AG04450 (cell line): ENCODE measurements at regions of chr13 and their contacts with region 1.

Region 1: DNA sequence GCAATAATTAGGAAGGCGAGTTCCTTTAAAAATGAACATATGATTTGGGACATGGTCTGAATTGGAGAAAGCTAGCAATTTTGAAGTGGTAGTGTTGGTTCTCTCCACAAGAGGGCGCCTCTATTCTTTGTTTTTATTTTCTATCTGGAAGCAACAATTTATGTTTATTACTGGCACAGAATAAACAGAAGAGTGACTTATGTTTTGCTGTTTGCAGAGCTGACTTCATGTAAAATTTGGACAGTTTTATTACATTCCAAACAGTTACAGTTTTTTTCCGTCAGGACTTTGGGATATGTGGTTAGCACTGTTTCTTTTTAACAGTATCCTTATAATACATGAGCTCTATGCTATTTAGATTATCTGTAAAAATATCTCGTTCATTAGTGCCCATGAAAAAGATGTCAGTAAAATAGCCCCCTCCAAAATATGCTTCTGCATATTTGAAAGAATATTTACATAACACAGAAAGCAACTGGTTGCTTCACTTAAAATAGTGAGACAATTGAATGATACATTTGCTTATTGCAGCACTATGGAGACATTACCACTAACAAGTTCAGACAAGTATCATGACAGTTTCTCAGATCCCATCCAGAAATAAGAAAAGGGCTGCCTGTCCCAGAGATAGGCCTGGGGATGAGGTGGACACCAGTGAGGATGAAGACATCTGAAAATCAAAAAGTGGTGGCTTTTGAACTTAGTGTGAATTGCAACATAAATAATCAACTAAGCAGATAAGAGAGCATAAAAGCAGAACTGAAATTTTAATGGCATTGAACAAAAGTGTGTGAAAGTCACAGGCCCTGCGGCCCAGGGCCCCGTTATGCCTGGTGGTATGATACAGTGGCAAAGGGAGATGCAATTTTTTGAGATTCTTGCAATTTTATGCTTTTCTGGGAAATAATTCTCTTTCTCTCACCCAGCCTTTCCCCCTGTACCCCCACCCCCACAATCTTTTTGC is 32.3 kb upstream of the FGF9 start:
- DNase-seq: no peak
- H3K4me3 ChIP-seq: no peak overlapping the region
- H3K27ac ChIP-seq: no peak overlapping the region
- H3K27me3 ChIP-seq: peaks cover 6% of the 10 kb centered on the region
- CTCF ChIP-seq: peak; percentile 74

Region 2: GRCh38 chr13:21348488-21349120 is 290.0 kb before region 1 on chr13:
- CTCF ChIA-PET with region 1: no interaction called
- POLR2A ChIA-PET with region 1: no interaction called
- DNase-seq: no peak
- H3K4me3 ChIP-seq: no peak overlapping the region
- H3K27ac ChIP-seq: no peak overlapping the region
- H3K27me3 ChIP-seq: peaks cover 2% of the 10 kb centered on the region
- CTCF ChIP-seq: no peak

Region 3: GRCh38 chr13:21616880-21617279 is 21.7 kb before region 1 on chr13:
- CTCF ChIA-PET with region 1: interaction called, 12 read pairs
- POLR2A ChIA-PET with region 1: no interaction called
- DNase-seq: no peak
- H3K4me3 ChIP-seq: no peak overlapping the region
- H3K27ac ChIP-seq: no peak overlapping the region
- H3K27me3 ChIP-seq: peaks cover 18% of the 10 kb centered on the region
- CTCF ChIP-seq: no peak

Region 4: DNA sequence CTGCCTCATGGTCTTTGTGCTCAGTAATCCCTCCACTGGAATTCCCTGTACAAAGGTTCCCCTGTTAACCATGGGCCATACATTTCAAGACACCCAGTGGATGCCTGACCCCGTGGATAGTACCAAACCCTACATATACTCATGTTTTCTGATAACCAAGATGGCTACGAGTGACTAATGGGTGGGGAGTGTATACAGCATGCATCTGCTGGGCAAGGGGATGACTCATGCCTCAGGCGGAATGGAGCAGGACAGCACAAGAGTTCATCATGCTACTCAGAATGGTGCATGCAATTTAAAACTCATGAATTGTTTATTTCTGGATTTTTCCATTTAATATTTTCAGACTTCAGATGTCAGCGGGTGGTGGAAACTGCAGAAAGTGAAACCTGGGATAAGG is 18.9 kb after region 1 on chr13:
- CTCF ChIA-PET with region 1: interaction called, 17 read pairs
- POLR2A ChIA-PET with region 1: no interaction called
- DNase-seq: peak; percentile 50
- H3K4me3 ChIP-seq: no peak overlapping the region
- H3K27ac ChIP-seq: no peak overlapping the region
- H3K27me3 ChIP-seq: peaks cover 5% of the 10 kb centered on the region
- CTCF ChIP-seq: no peak

Region 5: GRCh38 chr13:21986602-21987001 is 348.0 kb after region 1 on chr13:
- CTCF ChIA-PET with region 1: interaction called, 12 read pairs
- POLR2A ChIA-PET with region 1: no interaction called
- DNase-seq: no peak
- H3K4me3 ChIP-seq: no peak overlapping the region
- H3K27ac ChIP-seq: peak overlapping the region; percentile 40
- H3K27me3 ChIP-seq: no peaks in the 10 kb centered on the region
- CTCF ChIP-seq: no peak

Region 6: DNA sequence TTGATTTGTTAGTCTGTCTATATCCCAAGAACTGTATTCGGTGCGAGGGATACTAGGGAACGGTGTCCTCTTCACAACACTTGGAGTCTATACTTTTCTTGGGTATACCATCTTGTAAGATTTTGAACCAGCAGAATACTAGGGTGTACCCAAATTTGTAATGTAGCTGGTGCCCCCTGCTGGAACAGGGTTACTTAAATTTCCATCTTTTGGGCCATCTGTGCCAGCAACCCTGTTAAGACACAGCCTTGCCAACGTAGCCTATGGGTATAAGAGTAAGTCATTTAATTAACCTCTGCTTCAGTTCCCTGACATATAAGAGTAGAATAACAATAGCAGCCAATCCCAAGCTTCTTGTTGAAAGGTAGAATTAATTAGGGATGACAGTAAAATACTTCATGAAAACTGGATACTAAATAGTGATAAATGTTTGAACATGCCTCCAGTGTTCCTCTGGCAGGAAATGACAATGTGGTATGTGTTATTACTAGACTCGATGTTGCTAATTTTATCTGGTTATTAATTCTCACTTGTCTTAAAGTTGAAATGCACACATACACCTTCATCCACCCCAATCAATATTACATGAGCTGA is 639.8 kb after region 1 on chr13:
- CTCF ChIA-PET with region 1: interaction called, 27 read pairs
- POLR2A ChIA-PET with region 1: no interaction called
- DNase-seq: peak; percentile 18
- H3K4me3 ChIP-seq: no peak overlapping the region
- H3K27ac ChIP-seq: no peak overlapping the region
- H3K27me3 ChIP-seq: no peaks in the 10 kb centered on the region
- CTCF ChIP-seq: peak; percentile 65

Region 7: DNA sequence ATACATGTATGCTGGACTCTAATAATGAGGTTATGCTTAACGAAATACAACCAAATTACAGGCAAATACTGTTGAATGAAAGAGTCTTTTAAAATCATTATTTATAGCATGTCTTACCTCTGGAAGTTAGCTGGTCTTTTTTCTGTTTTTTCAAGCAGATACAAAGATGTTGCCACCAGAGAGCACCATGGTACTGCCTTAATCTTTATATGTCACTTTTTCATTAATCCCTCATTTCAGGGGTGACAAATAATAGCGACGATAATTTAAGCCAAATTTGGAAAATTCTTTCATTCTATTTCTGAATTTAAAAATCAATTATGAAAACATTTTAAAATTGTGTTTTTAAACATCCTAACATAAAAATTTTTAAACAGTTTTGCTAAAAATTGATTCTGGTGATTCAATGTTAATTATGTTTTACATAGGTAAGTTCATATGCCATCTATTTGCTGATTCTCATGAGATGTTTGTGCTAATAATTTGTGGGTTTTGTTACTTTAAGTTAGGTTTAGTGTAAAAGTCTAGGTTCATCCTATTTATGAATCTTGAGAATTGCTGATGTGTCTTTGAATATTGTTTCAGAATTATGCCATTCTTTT is 1162.9 kb after region 1 on chr13:
- CTCF ChIA-PET with region 1: interaction called, 15 read pairs
- POLR2A ChIA-PET with region 1: no interaction called
- DNase-seq: no peak
- H3K4me3 ChIP-seq: no peak overlapping the region
- H3K27ac ChIP-seq: no peak overlapping the region
- H3K27me3 ChIP-seq: no peaks in the 10 kb centered on the region
- CTCF ChIP-seq: no peak